Dorsolateral prefrontal cortex (tissue), 120 donors: ENCODE measurements at regions of chr9 and their contacts with region 1.

Region 1: GRCh38 chr9:132507746-132508469 is 74.5 kb upstream of the BARHL1 start:
- DNase-seq: peak in 9 of 10 donors; percentile 49 to 81 (median 68)
- H3K4me3 ChIP-seq: no peak overlapping the region
- H3K27ac ChIP-seq: no peak overlapping the region
- H3K27me3 ChIP-seq: peaks cover 0 to 33% (median 4%) of the 10 kb centered on the region in 45 donors
- CTCF ChIP-seq: peak; percentile 53 to 90 (median 81)

Region 2: GRCh38 chr9:132538071-132538470 is 30.2 kb after region 1 on chr9:
- intact Hi-C with region 1: no loop called
- DNase-seq: no peak
- H3K4me3 ChIP-seq: no peak overlapping the region
- H3K27ac ChIP-seq: no peak overlapping the region
- H3K27me3 ChIP-seq: peaks cover 0 to 11% (median under 1%) of the 10 kb centered on the region in 45 donors
- CTCF ChIP-seq: no peak

Region 3: DNA sequence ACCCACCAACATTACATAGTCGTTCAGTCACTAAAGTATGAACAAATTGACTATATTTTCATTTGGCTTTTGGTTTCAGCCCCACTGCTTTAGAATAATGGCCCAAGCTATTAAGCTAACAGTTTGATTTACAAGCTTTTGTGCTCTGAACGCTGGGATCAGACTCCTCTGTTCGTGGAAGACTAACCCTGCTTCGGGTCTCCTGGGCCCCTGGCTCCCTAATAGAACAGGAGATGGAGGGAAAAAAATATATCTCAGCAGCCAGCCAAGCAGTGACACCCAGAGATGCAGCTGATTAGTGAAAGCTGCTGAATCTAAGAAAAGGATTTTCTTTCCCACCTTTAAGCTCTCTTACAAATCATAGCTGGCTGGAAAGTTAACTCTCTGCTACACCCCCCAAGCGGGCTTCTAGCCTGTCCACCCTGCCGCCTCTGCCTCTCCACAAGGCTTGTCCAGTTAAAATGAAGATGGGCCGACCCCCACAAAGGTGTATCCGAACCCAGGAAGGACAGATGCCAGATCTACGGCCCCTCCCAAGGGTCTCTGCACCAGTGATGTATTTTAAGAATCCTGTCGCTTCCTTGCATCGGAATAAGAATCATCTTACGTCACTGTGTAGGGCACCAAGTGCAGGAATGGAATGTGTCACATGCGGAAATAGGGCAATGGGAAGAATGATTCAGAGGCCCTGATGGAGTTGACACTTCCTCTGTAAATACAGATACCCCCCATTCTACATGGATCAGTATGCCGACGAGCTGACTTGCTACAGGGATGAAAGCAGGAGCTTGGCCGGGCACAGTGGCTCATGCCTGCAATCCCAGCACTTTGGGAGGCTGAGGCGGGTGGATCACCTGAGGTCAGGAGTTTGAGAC is 41.1 kb after region 1 on chr9:
- intact Hi-C with region 1: no loop called
- DNase-seq: no peak
- H3K4me3 ChIP-seq: no peak overlapping the region
- H3K27ac ChIP-seq: no peak overlapping the region
- H3K27me3 ChIP-seq: peaks cover 0 to 25% (median 2%) of the 10 kb centered on the region in 45 donors
- CTCF ChIP-seq: no peak

Region 4: GRCh38 chr9:132575005-132575609 is 67.2 kb after region 1 on chr9:
- intact Hi-C with region 1: loop called in 1 of 2 experiments (anchors 5 kb)
- DNase-seq: peak; percentile 45 to 88 (median 73)
- H3K4me3 ChIP-seq: no peak overlapping the region
- H3K27ac ChIP-seq: no peak overlapping the region
- H3K27me3 ChIP-seq: peaks cover under 1 to 66% (median 30%) of the 10 kb centered on the region in 45 donors
- CTCF ChIP-seq: peak; percentile 15 to 93 (median 73)

Region 5: DNA sequence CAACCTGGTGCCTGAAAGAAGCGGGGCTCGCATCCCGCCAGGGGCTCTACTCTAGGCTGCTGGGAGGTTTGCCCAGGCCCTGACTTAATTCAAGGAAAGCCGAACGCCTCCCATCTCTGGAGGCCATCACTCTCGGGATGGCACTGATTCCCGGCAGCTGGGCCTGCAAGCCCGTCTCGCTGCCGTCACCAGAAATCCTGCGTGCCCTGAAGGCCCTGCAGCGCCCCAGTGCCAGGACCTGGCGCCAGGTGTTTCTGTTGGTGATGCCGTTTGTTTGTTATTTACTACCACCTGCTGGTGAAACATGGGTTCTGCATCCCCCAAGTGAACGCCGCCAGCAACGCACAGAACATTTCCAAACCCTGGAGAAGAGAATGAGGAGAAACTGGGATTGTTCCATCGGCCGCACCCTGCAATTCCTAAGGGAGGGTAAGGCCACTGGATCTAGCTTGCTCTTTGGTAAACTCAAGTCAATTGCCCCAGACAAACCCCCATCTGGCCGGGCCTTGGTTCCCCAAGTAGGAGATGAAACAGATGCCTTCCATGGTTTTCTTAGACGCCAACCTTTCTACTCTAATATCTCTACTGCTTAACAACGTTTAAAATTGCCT is 292.2 kb after region 1 on chr9:
- intact Hi-C with region 1: loop called (anchors 1 to 5 kb)
- DNase-seq: peak; percentile 70 to 86 (median 76)
- H3K4me3 ChIP-seq: peak overlapping the region in 26 of 59 donors; percentile 8 to 48 (median 28)
- H3K27ac ChIP-seq: peak overlapping the region in 1 of 59 donors; percentile 25
- H3K27me3 ChIP-seq: no peaks in the 10 kb centered on the region
- CTCF ChIP-seq: peak; percentile 65 to 98 (median 94)

Region 6: GRCh38 chr9:132973713-132974112 is 465.8 kb after region 1 on chr9:
- intact Hi-C with region 1: loop called in 1 of 2 experiments (anchors 5 kb)
- DNase-seq: no peak
- H3K4me3 ChIP-seq: no peak overlapping the region
- H3K27ac ChIP-seq: no peak overlapping the region
- H3K27me3 ChIP-seq: peaks cover 0 to 27% (median 3%) of the 10 kb centered on the region in 45 donors
- CTCF ChIP-seq: no peak